ENCODE measurements at regions of chr6 and their contacts with region 1.

Region 1: GRCh38 chr6:62357835-62358234 is 71.8 kb upstream of the KHDRBS2 start:
- DNase-seq: no peak
- ATAC-seq: no peak
- H3K4me3 ChIP-seq: no peak overlapping the region
- H3K27ac ChIP-seq: no peak overlapping the region
- H3K4me1 ChIP-seq: no peaks in the 10 kb centered on the region
- H3K27me3 ChIP-seq: no peaks in the 10 kb centered on the region
- CTCF ChIP-seq: no peak
- EP300 ChIP-seq: no peak
- POLR2A ChIP-seq: no peak
- RAD21 ChIP-seq: no peak

Region 2: GRCh38 chr6:62400521-62401259 is 42.9 kb after region 1 on chr6:
- CTCF ChIA-PET with region 1: no interaction called
- POLR2A ChIA-PET with region 1: no interaction called
- in situ Hi-C with region 1: loop called (anchors 5 kb)
- intact Hi-C with region 1: no loop called
- DNase-seq: no peak
- ATAC-seq: no peak
- H3K4me3 ChIP-seq: no peak overlapping the region
- H3K27ac ChIP-seq: no peak overlapping the region
- H3K4me1 ChIP-seq: no peaks in the 10 kb centered on the region
- H3K27me3 ChIP-seq: no peaks in the 10 kb centered on the region
- CTCF ChIP-seq: no peak
- EP300 ChIP-seq: no peak
- POLR2A ChIP-seq: no peak
- RAD21 ChIP-seq: no peak

Measured in HepG2 (cell line).